Heart left ventricle (tissue), 16 donors: ENCODE measurements at regions of chr5 and their contacts with region 1.

Region 1: DNA sequence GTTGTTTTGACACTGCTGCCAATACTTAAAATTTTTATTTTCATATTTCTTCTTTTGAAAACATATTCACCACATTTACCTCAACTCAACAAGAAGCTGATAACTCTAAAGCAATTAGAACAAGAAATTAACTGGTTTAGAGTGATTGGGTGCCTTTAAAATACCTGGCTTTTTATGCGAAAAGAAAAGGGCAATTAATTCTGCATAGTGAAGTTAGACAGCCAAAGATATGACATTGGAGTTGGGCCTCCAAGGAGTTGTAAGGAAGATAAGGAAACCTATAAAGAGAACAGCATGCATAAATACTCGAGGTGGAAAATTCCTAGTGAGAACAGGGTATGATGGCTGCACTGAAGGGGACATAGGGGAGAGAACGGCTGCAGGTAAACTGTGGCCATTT is 9.6 kb downstream of the AK6 start:
- DNase-seq: no peak
- ATAC-seq: peak in 1 of 4 donors; percentile 52
- H3K4me3 ChIP-seq: no peak overlapping the region
- H3K27ac ChIP-seq: no peak overlapping the region
- H3K4me1 ChIP-seq: peaks cover 0 to 7% (median 0%) of the 10 kb centered on the region in 12 donors
- H3K27me3 ChIP-seq: no peaks in the 10 kb centered on the region
- CTCF ChIP-seq: no peak
- POLR2A ChIP-seq: no peak

Region 2: DNA sequence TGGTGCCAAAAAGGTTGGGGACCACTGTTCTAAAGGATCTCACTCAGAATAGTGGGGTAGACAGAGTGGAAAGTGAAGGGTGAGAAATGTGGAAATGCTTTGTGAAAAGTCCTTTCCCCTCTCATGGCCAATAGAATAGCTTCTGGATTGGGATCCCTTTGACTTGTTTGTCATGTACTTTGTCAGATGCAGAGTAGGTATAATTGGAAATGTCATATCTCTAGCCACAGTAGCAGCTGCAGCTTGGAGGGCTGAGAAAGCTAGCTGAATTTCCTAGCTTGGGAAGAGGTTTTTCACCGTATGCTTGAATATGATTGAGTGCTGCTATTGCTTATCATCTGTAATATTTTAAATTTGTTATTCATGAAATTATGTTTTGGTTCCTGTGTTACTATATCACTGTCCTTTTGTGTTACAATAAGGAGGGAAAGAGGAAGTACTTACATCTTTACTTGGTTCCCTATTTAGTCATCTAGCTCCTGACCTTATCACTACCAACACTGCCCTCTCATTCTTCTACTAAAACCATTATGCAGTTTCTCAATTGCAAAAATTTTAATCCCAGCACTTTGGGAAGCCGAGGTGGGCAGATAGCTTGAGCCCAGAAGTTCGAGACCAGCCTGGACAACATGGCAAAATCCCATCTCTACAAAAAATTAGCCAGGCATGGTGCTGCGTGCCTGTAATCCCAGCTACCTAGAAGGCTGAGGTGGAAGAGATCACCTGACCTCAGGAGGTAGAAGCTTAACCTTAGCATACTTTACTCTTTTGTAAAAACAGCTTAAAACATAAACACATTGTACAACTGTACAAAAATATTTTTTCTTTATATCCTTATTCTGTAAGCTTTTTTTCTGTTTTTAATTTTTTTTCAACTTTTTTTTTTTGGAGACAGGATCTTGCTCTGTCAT is 253.4 kb before region 1 on chr5:
- intact Hi-C with region 1: loop called in 1 of 10 experiments (anchors 10 kb)
- DNase-seq: no peak
- ATAC-seq: no peak
- H3K4me3 ChIP-seq: no peak overlapping the region
- H3K27ac ChIP-seq: no peak overlapping the region
- H3K4me1 ChIP-seq: no peaks in the 10 kb centered on the region
- H3K27me3 ChIP-seq: no peaks in the 10 kb centered on the region
- CTCF ChIP-seq: no peak
- POLR2A ChIP-seq: no peak

Region 3: DNA sequence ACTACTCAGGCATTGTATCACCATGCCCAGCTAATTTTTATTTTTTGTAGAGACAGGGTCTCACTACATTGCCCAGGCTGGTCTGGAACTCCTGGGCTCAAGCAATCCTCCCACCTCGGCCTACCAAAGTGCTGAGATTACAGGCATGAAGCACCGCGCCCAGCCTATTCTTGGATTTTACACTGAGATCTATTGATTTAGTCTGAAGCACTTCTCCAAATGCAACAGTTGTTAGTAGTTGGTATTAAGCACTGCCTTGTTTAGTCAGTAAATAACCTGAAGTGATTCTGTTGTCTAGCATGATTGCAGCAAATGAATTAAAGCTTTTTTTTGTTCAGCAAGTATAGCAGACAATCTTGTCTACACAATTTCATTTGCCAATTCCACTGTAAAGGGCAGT is 201.7 kb before region 1 on chr5:
- intact Hi-C with region 1: no loop called
- DNase-seq: no peak
- ATAC-seq: no peak
- H3K4me3 ChIP-seq: no peak overlapping the region
- H3K27ac ChIP-seq: no peak overlapping the region
- H3K4me1 ChIP-seq: no peaks in the 10 kb centered on the region
- H3K27me3 ChIP-seq: no peaks in the 10 kb centered on the region
- CTCF ChIP-seq: no peak
- POLR2A ChIP-seq: no peak